ENCODE measurements at regions of chr12 and their contacts with region 1.

Region 1: DNA sequence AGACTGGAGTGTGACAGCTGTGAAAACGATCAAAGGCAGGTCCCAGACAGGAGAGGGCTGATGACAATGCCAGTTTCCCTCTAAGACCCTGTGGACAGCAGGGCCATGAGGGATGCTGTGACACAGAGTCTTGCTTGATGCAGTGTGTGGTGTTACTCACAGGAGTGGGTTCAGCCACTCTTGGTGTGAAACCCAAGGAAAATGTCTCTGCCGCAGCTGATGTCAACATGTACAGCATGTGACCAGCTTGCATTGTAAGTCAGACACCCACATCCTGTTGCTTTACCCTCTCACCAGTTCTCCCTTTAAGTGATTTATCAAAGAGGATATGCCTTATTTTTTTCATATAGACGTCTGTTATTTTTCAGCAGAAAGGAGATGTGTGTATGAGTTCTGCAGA is 268.6 kb downstream of the BTG1 start:
- DNase-seq: peak; percentile 94
- H3K4me3 Mint-ChIP-seq: peak overlapping the region; percentile 67
- H3K27ac Mint-ChIP-seq: peak overlapping the region; percentile 94
- H3K4me1 Mint-ChIP-seq: peaks cover 67% of the 10 kb centered on the region
- H3K27me3 Mint-ChIP-seq: no peaks in the 10 kb centered on the region

Region 2: GRCh38 chr12:91382081-91382543 is 494.9 kb before region 1 on chr12:
- CTCF ChIA-PET with region 1: no interaction called
- intact Hi-C with region 1: loop called (anchors 5 kb)
- DNase-seq: peak; percentile 92
- H3K4me3 Mint-ChIP-seq: peak overlapping the region; percentile 76
- H3K27ac Mint-ChIP-seq: no peak overlapping the region
- H3K4me1 Mint-ChIP-seq: peaks cover 5% of the 10 kb centered on the region
- H3K27me3 Mint-ChIP-seq: no peaks in the 10 kb centered on the region

Region 3: GRCh38 chr12:91657032-91657431 is 220.0 kb before region 1 on chr12:
- CTCF ChIA-PET with region 1: no interaction called
- intact Hi-C with region 1: no loop called
- DNase-seq: no peak
- H3K4me3 Mint-ChIP-seq: no peak overlapping the region
- H3K27ac Mint-ChIP-seq: no peak overlapping the region
- H3K4me1 Mint-ChIP-seq: peaks cover 17% of the 10 kb centered on the region
- H3K27me3 Mint-ChIP-seq: no peaks in the 10 kb centered on the region

Region 4: GRCh38 chr12:91902860-91903683 is 26.1 kb after region 1 on chr12:
- CTCF ChIA-PET with region 1: no interaction called
- intact Hi-C with region 1: loop called (anchors 1 kb)
- DNase-seq: no peak
- H3K4me3 Mint-ChIP-seq: no peak overlapping the region
- H3K27ac Mint-ChIP-seq: peak overlapping the region; percentile 38
- H3K4me1 Mint-ChIP-seq: peaks cover 36% of the 10 kb centered on the region
- H3K27me3 Mint-ChIP-seq: no peaks in the 10 kb centered on the region

Region 5: DNA sequence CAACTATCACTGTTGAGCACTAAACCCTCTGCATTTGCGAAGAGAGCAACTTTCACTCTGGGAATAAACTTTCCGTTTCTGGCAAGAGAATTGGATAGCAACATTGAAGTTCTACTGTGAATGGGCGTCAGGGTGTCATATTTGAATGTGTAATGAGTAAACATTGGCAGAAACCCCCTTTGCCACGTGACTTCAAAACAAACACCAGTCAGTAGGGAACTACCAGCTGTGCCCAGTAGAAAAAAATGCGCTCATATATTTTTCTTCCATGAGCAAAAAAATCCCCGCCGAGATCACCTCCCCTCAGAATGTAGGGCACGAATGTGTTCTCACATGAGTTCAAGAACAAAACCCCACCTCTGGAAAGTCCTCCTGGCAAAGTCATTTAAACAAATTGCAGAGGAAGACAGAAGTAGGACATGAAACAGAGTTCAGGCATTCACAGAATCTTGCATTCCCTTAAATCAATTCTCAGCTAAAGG is 188.0 kb after region 1 on chr12:
- CTCF ChIA-PET with region 1: no interaction called
- intact Hi-C with region 1: loop called (anchors 1 kb)
- DNase-seq: peak; percentile 86
- H3K4me3 Mint-ChIP-seq: peak overlapping the region; percentile 22
- H3K27ac Mint-ChIP-seq: peak overlapping the region; percentile 84
- H3K4me1 Mint-ChIP-seq: peaks cover 65% of the 10 kb centered on the region
- H3K27me3 Mint-ChIP-seq: no peaks in the 10 kb centered on the region

Region 6: GRCh38 chr12:92185052-92185451 is 308.0 kb after region 1 on chr12:
- CTCF ChIA-PET with region 1: no interaction called
- intact Hi-C with region 1: loop called (anchors 1 kb)
- DNase-seq: peak; percentile 62
- H3K4me3 Mint-ChIP-seq: peak overlapping the region; percentile 36
- H3K27ac Mint-ChIP-seq: peak overlapping the region; percentile 89
- H3K4me1 Mint-ChIP-seq: peaks cover 64% of the 10 kb centered on the region
- H3K27me3 Mint-ChIP-seq: no peaks in the 10 kb centered on the region

Region 7: DNA sequence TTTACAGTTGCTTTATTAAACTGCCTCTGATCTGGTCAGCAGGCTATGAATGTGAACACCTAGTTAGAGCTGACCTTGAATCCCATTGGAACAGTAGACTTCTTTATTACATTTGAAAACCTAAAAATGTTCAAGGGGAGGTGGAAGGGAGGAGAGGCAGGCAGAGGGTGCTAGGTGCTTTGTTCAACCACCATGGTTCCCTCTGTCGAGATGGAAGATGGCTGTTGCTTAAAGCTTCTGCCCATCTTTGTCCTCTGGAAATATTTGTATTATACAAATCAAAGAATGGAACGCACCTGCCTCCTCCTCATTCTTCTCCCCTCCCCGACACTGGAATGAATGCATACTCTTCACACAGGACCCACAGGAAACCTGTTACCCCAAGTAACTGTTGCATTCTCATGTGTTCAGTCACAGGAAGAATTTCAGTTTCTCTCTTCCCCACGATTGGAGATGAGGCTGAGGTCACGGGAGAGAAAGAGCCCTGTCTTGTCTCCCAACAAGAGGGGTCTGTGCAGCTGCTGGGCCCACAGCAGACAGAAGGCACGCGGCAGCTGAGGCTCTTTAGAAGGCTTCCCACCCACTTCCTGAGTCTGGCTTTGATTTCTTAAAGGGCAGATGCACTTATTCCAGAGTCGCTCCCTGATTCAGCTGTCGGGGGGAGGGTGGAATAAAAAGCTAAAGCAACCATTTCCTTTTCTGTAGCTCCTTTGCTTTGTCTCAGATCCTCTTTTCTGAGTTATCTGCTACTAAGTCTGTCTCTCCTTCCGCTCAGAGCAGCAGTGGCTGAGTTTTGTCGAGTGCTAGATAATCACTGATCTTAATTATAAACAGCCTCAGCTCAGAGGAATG is 486.5 kb after region 1 on chr12:
- CTCF ChIA-PET with region 1: no interaction called
- intact Hi-C with region 1: loop called (anchors 5 kb)
- DNase-seq: peak; percentile 56
- H3K4me3 Mint-ChIP-seq: peak overlapping the region; percentile 81
- H3K27ac Mint-ChIP-seq: peak overlapping the region; percentile 84
- H3K4me1 Mint-ChIP-seq: peaks cover 66% of the 10 kb centered on the region
- H3K27me3 Mint-ChIP-seq: no peaks in the 10 kb centered on the region

Region 8: DNA sequence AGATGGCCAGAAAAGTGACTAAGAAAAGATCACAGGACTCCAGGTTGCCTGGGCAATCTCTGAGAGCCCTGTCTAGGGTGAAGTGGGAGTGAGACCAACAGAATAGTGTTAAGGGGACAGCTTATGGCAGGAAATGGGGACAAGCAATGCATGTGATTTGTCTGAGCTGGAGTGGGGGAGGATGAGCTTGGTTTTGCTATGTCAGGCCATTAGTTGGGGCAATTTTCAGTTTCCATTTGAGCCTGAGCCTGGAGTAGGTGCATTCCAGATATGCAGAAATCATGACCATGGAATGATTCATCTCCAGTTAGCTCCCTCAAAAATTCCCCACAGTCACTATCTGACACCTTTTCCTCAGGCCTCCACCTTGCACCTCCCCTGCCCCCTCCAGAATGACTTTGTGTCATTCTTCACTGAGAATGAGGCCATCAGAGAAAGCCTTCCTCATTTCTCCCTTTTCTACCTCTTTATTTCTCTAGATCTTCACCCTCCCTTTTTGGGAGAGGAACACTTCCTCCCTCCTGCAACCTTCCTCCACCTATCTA is 674.9 kb after region 1 on chr12:
- CTCF ChIA-PET with region 1: no interaction called
- intact Hi-C with region 1: loop called (anchors 5 kb)
- DNase-seq: peak; percentile 83
- H3K4me3 Mint-ChIP-seq: no peak overlapping the region
- H3K27ac Mint-ChIP-seq: no peak overlapping the region
- H3K4me1 Mint-ChIP-seq: peaks cover 38% of the 10 kb centered on the region
- H3K27me3 Mint-ChIP-seq: no peaks in the 10 kb centered on the region